ENCODE measurements at regions of chr20 and their contacts with region 1.

Region 1: GRCh38 chr20:34629342-34629741 is 47.5 kb downstream of the PIGU start:
- DNase-seq: no peak
- ATAC-seq: no peak
- H3K4me3 ChIP-seq: no peak overlapping the region
- H3K27ac ChIP-seq: no peak overlapping the region
- H3K4me1 ChIP-seq: peaks cover 16% of the 10 kb centered on the region
- H3K27me3 ChIP-seq: no peaks in the 10 kb centered on the region
- CTCF ChIP-seq: no peak

Region 2: DNA sequence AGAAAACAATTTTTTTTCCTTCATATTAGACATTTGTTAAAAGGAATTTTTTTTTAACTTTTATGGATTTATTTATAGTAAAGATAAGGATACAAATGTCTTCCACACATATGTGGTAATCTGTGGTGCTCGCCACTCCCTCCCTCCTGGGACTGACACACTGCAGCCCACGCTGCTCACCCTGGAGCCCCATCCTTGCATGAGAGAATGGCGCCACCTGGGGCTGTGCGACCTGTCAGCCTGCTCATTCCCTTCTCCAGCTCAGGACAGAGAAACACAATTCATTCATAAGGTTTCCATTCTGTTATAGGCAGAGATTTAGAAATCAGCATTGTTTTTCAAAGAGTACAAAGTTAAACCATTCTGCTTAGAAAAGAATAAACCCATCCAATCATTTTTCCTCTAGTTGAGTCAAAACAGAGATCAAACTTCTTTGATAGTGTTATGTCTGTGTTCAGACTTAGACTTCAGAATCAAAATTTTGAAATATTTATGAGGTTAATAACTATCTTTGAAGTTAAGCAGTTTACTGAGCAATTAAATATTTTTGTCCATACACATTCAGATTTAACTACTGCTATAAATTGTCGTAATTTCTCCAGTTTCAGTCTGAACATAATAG is 156.0 kb before region 1 on chr20:
- CTCF ChIA-PET with region 1: no interaction called
- POLR2A ChIA-PET with region 1: no interaction called
- intact Hi-C with region 1: no loop called
- DNase-seq: peak; percentile 52
- ATAC-seq: peak; percentile 72
- H3K4me3 ChIP-seq: no peak overlapping the region
- H3K27ac ChIP-seq: no peak overlapping the region
- H3K4me1 ChIP-seq: peaks cover 7% of the 10 kb centered on the region; the same call in 1 of the 2 replicates
- H3K27me3 ChIP-seq: no peaks in the 10 kb centered on the region
- CTCF ChIP-seq: peak; percentile 70

Region 3: GRCh38 chr20:34693414-34693813 is 64.1 kb after region 1 on chr20:
- CTCF ChIA-PET with region 1: no interaction called
- POLR2A ChIA-PET with region 1: interaction called, 14 read pairs
- intact Hi-C with region 1: loop called (anchors 5 kb)
- DNase-seq: no peak
- ATAC-seq: no peak
- H3K4me3 ChIP-seq: no peak overlapping the region
- H3K27ac ChIP-seq: no peak overlapping the region
- H3K4me1 ChIP-seq: peaks cover 8% of the 10 kb centered on the region; the same call in 1 of the 2 replicates
- H3K27me3 ChIP-seq: no peaks in the 10 kb centered on the region
- CTCF ChIP-seq: no peak

Region 4: DNA sequence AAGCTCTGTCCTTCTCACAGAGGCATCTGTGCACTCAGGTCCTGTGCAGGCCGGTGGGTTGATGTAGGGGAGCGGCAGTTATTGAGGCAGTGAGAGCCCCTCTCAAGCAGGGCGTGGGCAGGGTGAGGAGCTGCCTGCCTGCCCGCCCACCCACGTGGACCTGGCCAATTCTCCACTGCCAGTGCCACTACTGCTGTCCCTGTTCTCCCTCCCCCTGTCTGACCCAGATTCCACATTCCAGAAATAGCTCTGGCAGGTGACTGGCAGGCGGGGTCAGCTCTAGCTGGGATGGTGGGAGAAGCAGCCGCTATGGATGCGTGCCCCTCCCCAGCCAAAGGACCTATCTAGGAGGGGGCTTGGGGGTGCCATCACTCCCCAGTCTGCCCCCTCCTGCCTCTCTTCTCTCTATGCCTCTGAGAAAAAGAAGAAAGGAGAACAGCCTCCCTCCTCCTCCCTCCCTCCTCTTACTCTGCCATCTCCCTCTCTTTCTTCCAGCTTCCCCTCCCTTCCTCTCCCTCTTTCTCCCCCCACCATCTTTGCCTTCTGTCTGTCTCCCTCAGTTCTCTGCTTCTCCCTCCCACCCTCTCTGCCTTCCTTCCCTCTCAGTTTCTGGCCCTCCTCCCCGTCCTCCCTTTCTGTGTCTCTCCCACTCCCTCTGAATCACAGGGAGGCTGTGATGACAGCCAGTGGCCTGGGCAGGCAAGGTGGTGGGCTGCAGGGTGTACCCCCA is 1825.5 kb after region 1 on chr20:
- CTCF ChIA-PET with region 1: no interaction called
- POLR2A ChIA-PET with region 1: no interaction called
- intact Hi-C with region 1: no loop called
- DNase-seq: peak; percentile 17
- ATAC-seq: peak; percentile 59
- H3K4me3 ChIP-seq: no peak overlapping the region
- H3K27ac ChIP-seq: no peak overlapping the region
- H3K4me1 ChIP-seq: no peaks in the 10 kb centered on the region
- H3K27me3 ChIP-seq: no peaks in the 10 kb centered on the region
- CTCF ChIP-seq: no peak

Measured in PC-3 (cell line).